Naive thymus-derived CD4-positive, alpha-beta T cell (primary cell): ENCODE measurements at regions of chr1 and their contacts with region 1.

Region 1: GRCh38 chr1:65209005-65209885 is 61.2 kb downstream of the AK4 start:
- DNase-seq: peak in 3 of 9 donors; percentile 4 to 15 (median 10)
- ATAC-seq: no peak
- H3K4me3 ChIP-seq: no peak overlapping the region
- H3K4me3 Mint-ChIP-seq: no peak overlapping the region
- H3K27ac ChIP-seq: no peak overlapping the region
- H3K27ac Mint-ChIP-seq: no peak overlapping the region
- H3K4me1 ChIP-seq: no peaks in the 10 kb centered on the region
- H3K4me1 Mint-ChIP-seq: peaks cover 0 to 59% (median 0%) of the 10 kb centered on the region in 7 donors
- H3K27me3 ChIP-seq: no peaks in the 10 kb centered on the region
- H3K27me3 Mint-ChIP-seq: peaks cover 0 to 12% (median 0%) of the 10 kb centered on the region in 5 donors

Region 2: GRCh38 chr1:64268653-64269557 is 940.3 kb before region 1 on chr1:
- CTCF ChIA-PET with region 1: no interaction called
- POLR2A ChIA-PET with region 1: no interaction called
- intact Hi-C with region 1: loop called in 1 of 2 experiments (anchors 10 kb)
- DNase-seq: peak; percentile 30 to 74 (median 62)
- ATAC-seq: peak; percentile 75
- H3K4me3 ChIP-seq: no peak overlapping the region
- H3K4me3 Mint-ChIP-seq: no peak overlapping the region
- H3K27ac ChIP-seq: no peak overlapping the region
- H3K27ac Mint-ChIP-seq: no peak overlapping the region
- H3K4me1 ChIP-seq: no peaks in the 10 kb centered on the region
- H3K4me1 Mint-ChIP-seq: no peaks in the 10 kb centered on the region
- H3K27me3 ChIP-seq: no peaks in the 10 kb centered on the region
- H3K27me3 Mint-ChIP-seq: peaks cover 3 to 18% (median 10%) of the 10 kb centered on the region in 5 donors

Region 3: DNA sequence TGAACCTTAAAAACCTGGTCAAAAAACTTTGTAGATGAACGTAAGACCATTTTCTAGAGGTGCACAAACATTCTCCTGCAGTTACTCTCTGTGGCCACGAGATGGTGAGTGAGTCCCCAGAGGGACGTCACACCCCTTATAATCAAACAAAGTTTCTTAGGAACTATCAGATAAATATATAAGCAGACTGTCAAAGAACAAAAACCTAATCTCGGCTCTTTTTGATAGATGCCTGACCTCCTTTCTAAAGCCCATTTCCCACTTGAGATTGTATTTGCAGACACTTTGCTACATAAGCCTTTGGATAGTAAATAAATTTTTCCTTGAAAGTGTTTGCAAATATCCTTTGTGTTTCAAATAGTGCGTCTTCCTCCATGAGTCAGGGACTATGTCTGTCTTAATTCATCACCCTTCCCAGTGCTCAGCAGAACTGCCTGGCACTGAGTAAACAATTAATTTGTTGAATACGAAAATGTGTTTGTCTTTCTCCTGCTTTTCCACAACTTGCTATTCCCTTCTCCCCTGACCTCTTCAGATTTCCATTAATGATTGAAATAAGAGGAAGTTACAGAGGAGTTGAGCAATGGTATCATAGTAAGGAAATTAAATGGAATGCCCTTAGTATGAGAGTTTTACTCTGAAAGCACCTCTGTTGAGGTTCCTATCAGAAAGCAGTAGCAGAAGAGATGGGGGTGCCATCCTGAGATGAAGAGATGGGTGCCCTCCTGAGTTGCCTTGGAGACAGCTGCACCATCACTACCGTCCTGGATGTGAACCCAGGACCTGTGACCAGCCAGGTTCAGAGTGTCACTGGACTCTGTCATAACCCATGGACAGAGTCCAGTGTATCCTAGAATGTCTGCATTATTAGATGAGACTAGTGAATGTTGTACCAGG is 522.2 kb before region 1 on chr1:
- CTCF ChIA-PET with region 1: no interaction called
- POLR2A ChIA-PET with region 1: no interaction called
- intact Hi-C with region 1: loop called in 1 of 2 experiments (anchors 10 kb)
- DNase-seq: peak in 7 of 9 donors; percentile 9 to 45 (median 39)
- ATAC-seq: peak; percentile 75
- H3K4me3 ChIP-seq: no peak overlapping the region
- H3K4me3 Mint-ChIP-seq: no peak overlapping the region
- H3K27ac ChIP-seq: no peak overlapping the region
- H3K27ac Mint-ChIP-seq: no peak overlapping the region
- H3K4me1 ChIP-seq: no peaks in the 10 kb centered on the region
- H3K4me1 Mint-ChIP-seq: peaks cover 0 to 11% (median 0%) of the 10 kb centered on the region in 7 donors
- H3K27me3 ChIP-seq: no peaks in the 10 kb centered on the region
- H3K27me3 Mint-ChIP-seq: no peaks in the 10 kb centered on the region

Region 4: DNA sequence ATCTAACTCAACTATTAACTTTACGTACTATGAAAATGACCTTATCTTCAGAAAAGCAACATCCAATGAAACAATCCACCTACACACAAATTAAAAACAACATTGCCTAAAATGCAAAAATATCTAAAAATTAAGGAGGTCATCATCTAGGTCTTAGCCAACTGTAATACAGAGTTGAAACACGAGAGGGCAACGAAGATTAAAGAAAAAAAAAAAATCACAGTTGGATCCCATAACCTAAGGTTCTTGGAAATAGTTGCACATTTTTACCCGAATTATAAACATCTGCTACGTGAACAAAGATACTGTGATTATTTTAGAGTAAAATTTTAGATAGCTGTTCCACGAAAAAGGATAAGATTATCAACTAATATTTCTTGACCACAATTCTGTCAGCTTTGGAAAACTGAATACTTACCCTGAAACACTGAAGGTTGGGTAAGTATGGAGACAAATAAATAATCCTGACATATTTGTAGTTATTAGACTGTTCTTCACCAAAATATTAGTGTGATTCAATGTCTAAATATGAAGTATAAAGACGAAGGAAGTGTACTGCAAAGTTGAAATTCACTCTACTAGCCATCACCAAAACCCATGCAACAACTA is 149.2 kb before region 1 on chr1:
- CTCF ChIA-PET with region 1: interaction called, 5 read pairs
- POLR2A ChIA-PET with region 1: no interaction called
- intact Hi-C with region 1: loop called (anchors 1 kb)
- DNase-seq: peak in 3 of 9 donors; percentile 25 to 29 (median 25)
- ATAC-seq: peak; percentile 51
- H3K4me3 ChIP-seq: no peak overlapping the region
- H3K4me3 Mint-ChIP-seq: peak overlapping the region in 5 of 10 donors; percentile 8 to 54 (median 51)
- H3K27ac ChIP-seq: no peak overlapping the region
- H3K27ac Mint-ChIP-seq: peak overlapping the region in 6 of 9 donors; percentile 12 to 76 (median 34)
- H3K4me1 ChIP-seq: peaks cover 6 to 16% of the 10 kb centered on the region in 2 donors
- H3K4me1 Mint-ChIP-seq: peaks cover 21 to 87% (median 80%) of the 10 kb centered on the region in 7 donors
- H3K27me3 ChIP-seq: no peaks in the 10 kb centered on the region
- H3K27me3 Mint-ChIP-seq: no peaks in the 10 kb centered on the region

Region 5: GRCh38 chr1:65148548-65149350 is 60.5 kb before region 1 on chr1:
- CTCF ChIA-PET with region 1: no interaction called
- POLR2A ChIA-PET with region 1: no interaction called
- intact Hi-C with region 1: loop called in 1 of 2 experiments (anchors 2 kb)
- DNase-seq: peak in 6 of 9 donors; percentile 8 to 82 (median 18)
- ATAC-seq: peak; percentile 51
- H3K4me3 ChIP-seq: peak overlapping the region; percentile 45
- H3K4me3 Mint-ChIP-seq: peak overlapping the region; percentile 81 to 95 (median 86)
- H3K27ac ChIP-seq: no peak overlapping the region
- H3K27ac Mint-ChIP-seq: peak overlapping the region in 1 of 9 donors; percentile 81
- H3K4me1 ChIP-seq: peaks cover 0 to 6% of the 10 kb centered on the region in 2 donors
- H3K4me1 Mint-ChIP-seq: peaks cover 7 to 52% (median 14%) of the 10 kb centered on the region in 7 donors
- H3K27me3 ChIP-seq: peaks cover 0 to 6% of the 10 kb centered on the region in 2 donors
- H3K27me3 Mint-ChIP-seq: peaks cover 12 to 60% (median 53%) of the 10 kb centered on the region in 5 donors